PC-9 (cell line): ENCODE measurements at regions of chr6 and their contacts with region 1.

Region 1: DNA sequence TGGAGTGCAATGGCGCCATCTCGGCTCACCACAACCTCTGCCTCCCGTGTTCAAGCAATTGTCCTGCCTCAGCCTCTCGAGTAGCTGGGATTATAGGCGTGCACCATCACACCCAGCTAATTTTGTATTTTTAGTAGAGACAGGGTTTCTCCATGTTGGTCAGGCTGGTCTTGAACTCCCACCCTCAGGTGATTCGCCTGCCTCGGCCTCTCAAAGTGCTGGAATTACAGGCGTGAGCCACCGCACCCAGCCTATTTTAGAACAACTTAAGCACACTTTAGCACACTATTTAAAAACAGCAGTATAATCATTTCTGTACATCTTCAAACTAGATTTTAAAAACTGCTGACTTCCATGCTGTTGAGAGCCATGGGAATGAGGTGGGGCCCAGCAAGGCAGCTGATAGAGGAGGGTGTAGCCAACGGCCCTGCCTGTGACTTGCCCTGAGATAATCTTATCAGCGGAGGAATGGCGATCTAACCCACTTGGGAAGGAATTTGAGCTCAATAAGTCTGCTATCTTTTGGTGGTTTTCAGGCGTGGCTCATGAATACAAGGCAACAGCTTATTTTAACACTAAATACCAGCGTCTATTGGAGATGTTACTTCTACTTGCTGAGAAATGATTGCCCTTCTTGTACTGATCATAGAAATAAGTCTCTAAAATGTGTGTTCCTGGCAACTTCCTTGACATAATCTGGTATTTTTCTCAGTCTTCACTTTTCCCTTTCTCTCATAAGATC is 12.1 kb downstream of the ZDHHC14 start:
- DNase-seq: no peak
- H3K4me3 ChIP-seq: no peak overlapping the region
- H3K27ac ChIP-seq: no peak overlapping the region
- H3K4me1 ChIP-seq: no peaks in the 10 kb centered on the region
- H3K27me3 ChIP-seq: no peaks in the 10 kb centered on the region
- CTCF ChIP-seq: no peak

Region 2: GRCh38 chr6:156662025-156662445 is 731.1 kb before region 1 on chr6:
- CTCF ChIA-PET with region 1: no interaction called
- POLR2A ChIA-PET with region 1: no interaction called
- intact Hi-C with region 1: no loop called
- DNase-seq: peak in 1 of 2 experiments; percentile 34
- H3K4me3 ChIP-seq: no peak overlapping the region
- H3K27ac ChIP-seq: no peak overlapping the region
- H3K4me1 ChIP-seq: no peaks in the 10 kb centered on the region
- H3K27me3 ChIP-seq: no peaks in the 10 kb centered on the region; the same call in 1 of the 2 replicates
- CTCF ChIP-seq: peak; percentile 70

Region 3: DNA sequence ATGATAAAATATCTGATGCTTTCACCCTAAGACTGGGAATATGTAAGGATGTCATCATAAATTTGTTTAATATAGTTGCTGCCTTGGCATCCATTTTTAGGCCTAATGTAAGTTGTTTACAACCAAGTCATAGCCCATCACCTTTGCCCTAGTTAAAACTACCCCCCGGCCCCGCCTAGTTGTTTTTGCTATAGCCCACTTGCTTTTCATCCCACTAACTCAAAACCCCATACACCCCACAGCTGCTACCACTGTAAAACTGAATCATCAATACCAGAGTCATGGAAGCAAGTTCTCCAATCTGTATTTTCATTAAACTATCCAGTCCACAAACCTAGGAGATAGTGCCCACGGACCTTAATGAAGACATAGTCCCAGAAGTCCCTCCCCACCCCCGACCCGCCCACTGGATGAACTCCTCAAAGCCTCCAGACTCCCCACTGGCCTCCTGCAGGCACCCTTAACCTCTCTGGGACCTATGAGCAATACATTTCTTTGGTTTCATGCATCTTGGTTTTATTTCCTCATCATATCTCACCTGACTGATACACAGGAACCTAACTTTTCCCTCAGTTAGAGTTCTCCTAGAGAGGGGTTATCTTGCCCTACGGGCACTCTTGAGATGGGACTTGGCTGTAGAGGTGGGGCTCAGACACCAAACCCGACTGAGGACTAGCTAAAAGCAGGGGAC is 24.6 kb before region 1 on chr6:
- CTCF ChIA-PET with region 1: no interaction called
- POLR2A ChIA-PET with region 1: no interaction called
- intact Hi-C with region 1: no loop called
- DNase-seq: no peak
- H3K4me3 ChIP-seq: no peak overlapping the region
- H3K27ac ChIP-seq: no peak overlapping the region
- H3K4me1 ChIP-seq: no peaks in the 10 kb centered on the region
- H3K27me3 ChIP-seq: no peaks in the 10 kb centered on the region
- CTCF ChIP-seq: no peak

Region 4: GRCh38 chr6:157428427-157429202 is 35.5 kb after region 1 on chr6:
- CTCF ChIA-PET with region 1: no interaction called
- POLR2A ChIA-PET with region 1: no interaction called
- intact Hi-C with region 1: no loop called
- DNase-seq: peak; percentile 28 to 87
- H3K4me3 ChIP-seq: no peak overlapping the region
- H3K27ac ChIP-seq: peak overlapping the region; percentile 49
- H3K4me1 ChIP-seq: peaks cover 31% of the 10 kb centered on the region
- H3K27me3 ChIP-seq: no peaks in the 10 kb centered on the region
- CTCF ChIP-seq: no peak

Region 5: DNA sequence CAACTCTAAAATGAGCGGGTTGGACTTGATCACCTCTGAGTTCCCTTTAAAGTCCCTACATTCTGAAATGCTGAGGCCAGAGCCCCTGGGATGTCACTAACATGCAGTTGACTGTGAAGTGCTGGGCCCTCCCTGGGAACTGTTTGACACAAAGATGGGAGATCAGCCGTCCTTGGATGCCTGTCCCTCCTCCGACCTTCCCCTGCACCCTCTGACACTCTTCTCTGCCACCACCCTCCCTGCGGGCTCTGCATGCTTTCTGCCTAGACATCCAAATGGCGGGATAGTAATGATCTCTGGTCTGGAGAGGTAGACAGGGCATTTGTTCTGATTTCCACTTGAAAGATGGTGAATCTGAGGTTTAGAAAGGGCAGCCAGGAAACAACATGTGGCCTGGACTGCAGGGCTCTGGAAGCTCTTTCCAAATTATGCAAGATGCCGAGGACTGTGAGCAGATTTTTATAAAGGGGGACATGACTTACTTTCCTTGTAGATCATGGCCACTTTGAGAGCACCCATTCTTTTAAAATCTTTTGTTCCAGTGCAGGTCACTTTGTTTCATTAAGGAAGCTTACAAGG is 101.1 kb after region 1 on chr6:
- CTCF ChIA-PET with region 1: interaction called, 13 read pairs
- POLR2A ChIA-PET with region 1: no interaction called
- intact Hi-C with region 1: no loop called
- DNase-seq: no peak
- H3K4me3 ChIP-seq: no peak overlapping the region
- H3K27ac ChIP-seq: no peak overlapping the region
- H3K4me1 ChIP-seq: no peaks in the 10 kb centered on the region
- H3K27me3 ChIP-seq: no peaks in the 10 kb centered on the region
- CTCF ChIP-seq: no peak

Region 6: GRCh38 chr6:158789434-158789917 is 1396.4 kb after region 1 on chr6:
- CTCF ChIA-PET with region 1: interaction called, 14 read pairs
- POLR2A ChIA-PET with region 1: no interaction called
- intact Hi-C with region 1: no loop called
- DNase-seq: no peak
- H3K4me3 ChIP-seq: no peak overlapping the region
- H3K27ac ChIP-seq: peak overlapping the region; percentile 48
- H3K4me1 ChIP-seq: peaks cover 94% of the 10 kb centered on the region
- H3K27me3 ChIP-seq: no peaks in the 10 kb centered on the region
- CTCF ChIP-seq: no peak